Activated CD8-positive, alpha-beta T cell treated with anti-CD3 and anti-CD28 coated beads, Interleukin-2, amount 10 ng/mL, durations not matched to agents 7 days and 5 days (primary cell): ENCODE measurements at regions of chr14 and their contacts with region 1.

Region 1: DNA sequence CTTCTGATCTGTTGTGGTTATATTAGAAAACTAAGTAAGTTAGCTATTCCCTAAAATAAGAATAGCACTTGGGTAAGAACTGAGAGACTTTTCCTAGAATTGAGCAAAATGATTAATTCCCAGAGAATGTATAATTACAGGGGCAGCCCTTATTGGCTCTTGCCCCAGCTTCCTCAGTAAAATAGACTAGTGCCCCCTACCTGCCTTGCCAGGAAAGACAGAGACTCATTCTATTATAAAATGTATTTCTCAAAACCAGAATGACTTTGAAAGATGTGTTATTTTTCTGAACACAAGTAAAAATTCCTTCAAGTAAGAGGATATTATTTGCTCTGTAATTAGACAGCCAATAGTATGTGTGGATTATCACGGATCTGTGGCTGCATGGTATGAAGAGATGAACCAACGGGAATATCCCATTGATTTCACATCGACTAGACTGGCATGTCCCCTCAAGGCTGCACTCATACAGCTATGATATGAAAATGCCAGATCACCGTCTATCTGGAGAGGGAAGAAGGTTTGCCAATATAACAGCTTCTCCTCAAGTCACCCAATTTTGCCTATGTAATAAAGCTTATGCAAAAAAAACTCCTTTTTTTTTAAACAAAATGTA is 7.4 kb upstream of the GLRX5 start:
- DNase-seq: peak; percentile 74
- ATAC-seq: no peak
- H3K4me3 Mint-ChIP-seq: no peak overlapping the region
- H3K27ac Mint-ChIP-seq: peak overlapping the region; percentile 65
- H3K4me1 Mint-ChIP-seq: peaks cover 78% of the 10 kb centered on the region
- H3K27me3 Mint-ChIP-seq: no peaks in the 10 kb centered on the region

Region 2: DNA sequence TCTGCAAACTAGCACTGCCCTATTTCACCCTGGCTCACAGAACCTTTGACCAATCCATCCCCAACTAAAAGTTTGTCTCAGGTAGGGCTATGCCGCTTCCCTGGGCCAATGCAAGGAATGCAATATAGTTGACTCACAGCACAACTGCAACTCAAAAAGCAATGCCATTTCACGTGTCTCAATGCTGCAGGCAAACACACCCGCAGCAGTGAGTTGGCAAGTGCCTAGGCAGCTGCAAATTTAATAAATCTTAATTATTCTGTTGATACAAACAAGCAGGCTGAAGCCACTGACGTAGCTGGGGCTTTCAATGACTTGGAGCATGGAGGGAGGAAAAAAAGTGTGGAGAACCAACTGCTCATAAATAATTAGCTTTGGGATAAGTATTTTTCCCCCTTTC is 98.9 kb before region 1 on chr14:
- CTCF ChIA-PET with region 1: interaction called, 22 read pairs
- POLR2A ChIA-PET with region 1: interaction called, 3 read pairs
- DNase-seq: no peak
- ATAC-seq: no peak
- H3K4me3 Mint-ChIP-seq: no peak overlapping the region
- H3K27ac Mint-ChIP-seq: no peak overlapping the region
- H3K4me1 Mint-ChIP-seq: no peaks in the 10 kb centered on the region
- H3K27me3 Mint-ChIP-seq: no peaks in the 10 kb centered on the region

Region 3: GRCh38 chr14:95452176-95452892 is 75.2 kb before region 1 on chr14:
- CTCF ChIA-PET with region 1: interaction called, 14 read pairs
- POLR2A ChIA-PET with region 1: interaction called, 9 read pairs
- DNase-seq: peak; percentile 26
- ATAC-seq: peak; percentile 42
- H3K4me3 Mint-ChIP-seq: no peak overlapping the region
- H3K27ac Mint-ChIP-seq: no peak overlapping the region
- H3K4me1 Mint-ChIP-seq: no peaks in the 10 kb centered on the region
- H3K27me3 Mint-ChIP-seq: no peaks in the 10 kb centered on the region

Region 4: DNA sequence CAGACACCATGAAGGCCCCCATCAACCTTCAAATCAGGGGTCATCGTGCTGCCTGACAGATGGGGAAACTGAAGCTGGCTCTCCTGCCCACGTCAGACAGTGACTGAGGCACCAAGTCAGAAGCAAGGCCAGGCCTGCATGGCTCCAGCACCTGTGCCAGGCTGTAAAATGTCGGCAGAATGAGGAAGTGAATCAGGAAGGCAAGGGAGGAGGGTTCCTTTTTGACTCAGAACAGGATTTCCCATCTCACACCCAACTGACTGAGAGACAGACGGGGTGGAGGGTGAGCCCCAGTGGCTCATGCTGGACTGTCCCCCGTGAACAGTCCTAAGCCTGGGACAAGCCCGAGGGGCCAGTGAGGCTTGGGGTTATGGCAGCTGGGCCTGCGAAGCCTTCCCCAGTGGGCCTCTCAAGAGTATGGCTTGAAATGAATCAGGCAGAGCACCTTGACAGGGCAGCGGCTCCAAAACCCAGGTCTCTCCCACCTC is 31.9 kb before region 1 on chr14:
- CTCF ChIA-PET with region 1: interaction called, 199 read pairs
- POLR2A ChIA-PET with region 1: interaction called, 22 read pairs
- DNase-seq: no peak
- ATAC-seq: peak; percentile 32
- H3K4me3 Mint-ChIP-seq: peak overlapping the region; percentile 18
- H3K27ac Mint-ChIP-seq: peak overlapping the region; percentile 89
- H3K4me1 Mint-ChIP-seq: peaks cover 65% of the 10 kb centered on the region
- H3K27me3 Mint-ChIP-seq: no peaks in the 10 kb centered on the region

Region 5: GRCh38 chr14:95515596-95516552 is 11.6 kb before region 1 on chr14:
- CTCF ChIA-PET with region 1: interaction called, 199 read pairs
- POLR2A ChIA-PET with region 1: interaction called, 19 read pairs
- DNase-seq: peak; percentile 86
- ATAC-seq: peak; percentile 85
- H3K4me3 Mint-ChIP-seq: peak overlapping the region; percentile 91
- H3K27ac Mint-ChIP-seq: peak overlapping the region; percentile 85
- H3K4me1 Mint-ChIP-seq: peaks cover 66% of the 10 kb centered on the region
- H3K27me3 Mint-ChIP-seq: no peaks in the 10 kb centered on the region

Region 6: GRCh38 chr14:95577067-95577800 is 49.7 kb after region 1 on chr14:
- CTCF ChIA-PET with region 1: no interaction called
- POLR2A ChIA-PET with region 1: no interaction called
- DNase-seq: no peak
- ATAC-seq: no peak
- H3K4me3 Mint-ChIP-seq: no peak overlapping the region
- H3K27ac Mint-ChIP-seq: no peak overlapping the region
- H3K4me1 Mint-ChIP-seq: no peaks in the 10 kb centered on the region
- H3K27me3 Mint-ChIP-seq: peaks cover 3% of the 10 kb centered on the region

Region 7: GRCh38 chr14:95635060-95635459 is 107.6 kb after region 1 on chr14:
- CTCF ChIA-PET with region 1: no interaction called
- POLR2A ChIA-PET with region 1: no interaction called
- DNase-seq: no peak
- ATAC-seq: no peak
- H3K4me3 Mint-ChIP-seq: no peak overlapping the region
- H3K27ac Mint-ChIP-seq: no peak overlapping the region
- H3K4me1 Mint-ChIP-seq: no peaks in the 10 kb centered on the region
- H3K27me3 Mint-ChIP-seq: no peaks in the 10 kb centered on the region